CD4-positive, alpha-beta memory T cell (primary cell): ENCODE measurements at regions of chr14 and their contacts with region 1.

Region 1: DNA sequence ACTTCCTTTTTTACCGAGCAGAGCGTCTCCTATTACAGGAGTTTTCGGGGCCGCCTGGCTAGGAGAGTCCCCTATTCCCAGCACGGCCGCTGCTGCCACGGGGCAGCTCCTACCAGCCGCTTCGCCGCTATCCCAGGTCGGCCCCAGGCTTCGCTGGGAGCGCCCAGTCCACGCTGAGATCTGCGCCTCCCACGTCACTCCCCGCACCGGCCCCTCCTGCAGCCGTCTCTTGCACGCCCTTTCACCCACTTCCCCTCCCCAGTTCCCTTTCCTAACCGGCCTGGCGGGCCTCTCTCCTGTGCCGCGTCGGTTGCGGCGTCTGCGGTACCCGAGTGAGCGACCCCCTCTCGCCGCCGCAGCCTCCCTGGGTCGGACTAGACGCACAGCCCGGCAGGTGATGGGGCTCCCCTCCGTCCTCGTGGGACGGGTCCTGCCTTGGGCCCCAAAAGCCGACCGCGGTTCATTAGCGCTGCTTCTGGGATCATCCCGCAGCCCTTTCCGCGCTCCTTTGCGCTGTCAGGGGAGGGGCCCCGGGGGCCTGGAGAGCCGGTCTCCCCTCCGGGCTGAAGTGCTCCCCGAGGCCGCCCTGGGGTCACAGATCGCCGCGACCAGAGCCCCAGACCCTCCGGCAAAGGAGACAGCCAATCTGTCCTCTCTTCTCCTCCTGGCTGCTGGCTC is 1318.4 kb downstream of the TMEM121 start:
- DNase-seq: peak; percentile 63 to 77 (median 65)
- H3K4me3 ChIP-seq: peak overlapping the region; percentile 83 to 94
- H3K4me3 Mint-ChIP-seq: peak overlapping the region; percentile 95 to 98 (median 97)
- H3K27ac ChIP-seq: peak overlapping the region; percentile 58
- H3K27ac Mint-ChIP-seq: peak overlapping the region; percentile 75 to 97 (median 93)
- H3K4me1 ChIP-seq: peaks cover 20% of the 10 kb centered on the region
- H3K4me1 Mint-ChIP-seq: peaks cover 12 to 47% (median 21%) of the 10 kb centered on the region in 4 donors
- H3K27me3 ChIP-seq: no peaks in the 10 kb centered on the region
- H3K27me3 Mint-ChIP-seq: no peaks in the 10 kb centered on the region

Region 2: DNA sequence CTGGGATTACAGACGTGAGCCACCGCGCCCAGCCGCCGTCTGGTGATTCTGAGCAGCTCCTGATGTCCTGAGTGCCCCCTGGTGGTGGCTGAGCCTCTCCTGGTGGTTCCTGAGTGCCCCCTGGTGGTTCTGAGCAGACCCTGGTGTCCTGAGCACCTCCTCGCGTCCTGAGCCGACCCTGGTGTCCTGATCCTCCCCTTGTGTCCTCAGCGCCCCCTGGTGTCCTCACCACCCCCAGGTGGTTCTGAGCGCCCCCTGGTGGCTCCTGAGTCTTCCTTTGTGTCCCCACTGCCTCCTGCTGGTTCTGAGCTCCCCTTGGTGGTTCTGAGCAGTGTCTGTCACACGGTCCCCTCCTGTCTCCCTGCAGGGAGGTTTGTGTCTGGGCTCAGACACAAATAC is 13.4 kb before region 1 on chr14:
- CTCF ChIA-PET with region 1: interaction called, 10 read pairs
- POLR2A ChIA-PET with region 1: interaction called, 3 read pairs
- intact Hi-C with region 1: no loop called
- DNase-seq: peak; percentile 32 to 60 (median 35)
- H3K4me3 ChIP-seq: no peak overlapping the region
- H3K4me3 Mint-ChIP-seq: no peak overlapping the region
- H3K27ac ChIP-seq: no peak overlapping the region
- H3K27ac Mint-ChIP-seq: peak overlapping the region in 1 of 7 donors; percentile 77
- H3K4me1 ChIP-seq: no peaks in the 10 kb centered on the region
- H3K4me1 Mint-ChIP-seq: no peaks in the 10 kb centered on the region
- H3K27me3 ChIP-seq: no peaks in the 10 kb centered on the region
- H3K27me3 Mint-ChIP-seq: peaks cover 10 to 13% of the 10 kb centered on the region in 2 donors